ENCODE measurements at regions of chr1 and their contacts with region 1.

Region 1: GRCh38 chr1:183804881-183805841 is at the start of gene RGL1:
- DNase-seq: peak; percentile 81 to 85
- H3K4me3 ChIP-seq: peak within 1 kb of the TSS; percentile 74
- H3K4me3 Mint-ChIP-seq: peak within 1 kb of the TSS; percentile 99
- H3K27ac Mint-ChIP-seq: peak within 1 kb of the TSS; percentile 95
- H3K4me1 ChIP-seq: peaks cover 36% of the 10 kb centered on the region
- H3K4me1 Mint-ChIP-seq: peaks cover 28% of the 10 kb centered on the region
- H3K27me3 ChIP-seq: no peaks in the 10 kb centered on the region
- H3K27me3 Mint-ChIP-seq: no peaks in the 10 kb centered on the region
- CTCF ChIP-seq: no peak
- total RNA-seq, gene RGL1: 33.8 and 34.5 TPM in 2 replicates

Region 2: GRCh38 chr1:183792300-183792699 is 12.9 kb before region 1 on chr1:
- CTCF ChIA-PET with region 1: no interaction called
- POLR2A ChIA-PET with region 1: interaction called, 3 read pairs
- intact Hi-C with region 1: loop called (anchors 1 kb)
- DNase-seq: no peak
- H3K4me3 ChIP-seq: no peak overlapping the region
- H3K4me3 Mint-ChIP-seq: no peak overlapping the region
- H3K27ac Mint-ChIP-seq: no peak overlapping the region
- H3K4me1 ChIP-seq: peaks cover 15% of the 10 kb centered on the region
- H3K4me1 Mint-ChIP-seq: peaks cover 27% of the 10 kb centered on the region
- H3K27me3 ChIP-seq: no peaks in the 10 kb centered on the region
- H3K27me3 Mint-ChIP-seq: no peaks in the 10 kb centered on the region
- CTCF ChIP-seq: no peak

Region 3: GRCh38 chr1:183821889-183822611 is 16.9 kb after region 1 on chr1:
- CTCF ChIA-PET with region 1: no interaction called
- POLR2A ChIA-PET with region 1: no interaction called
- intact Hi-C with region 1: no loop called
- DNase-seq: no peak
- H3K4me3 ChIP-seq: no peak overlapping the region
- H3K4me3 Mint-ChIP-seq: no peak overlapping the region
- H3K27ac Mint-ChIP-seq: no peak overlapping the region
- H3K4me1 ChIP-seq: peaks cover 26% of the 10 kb centered on the region
- H3K4me1 Mint-ChIP-seq: peaks cover 22% of the 10 kb centered on the region
- H3K27me3 ChIP-seq: no peaks in the 10 kb centered on the region
- H3K27me3 Mint-ChIP-seq: no peaks in the 10 kb centered on the region
- CTCF ChIP-seq: no peak

Region 4: DNA sequence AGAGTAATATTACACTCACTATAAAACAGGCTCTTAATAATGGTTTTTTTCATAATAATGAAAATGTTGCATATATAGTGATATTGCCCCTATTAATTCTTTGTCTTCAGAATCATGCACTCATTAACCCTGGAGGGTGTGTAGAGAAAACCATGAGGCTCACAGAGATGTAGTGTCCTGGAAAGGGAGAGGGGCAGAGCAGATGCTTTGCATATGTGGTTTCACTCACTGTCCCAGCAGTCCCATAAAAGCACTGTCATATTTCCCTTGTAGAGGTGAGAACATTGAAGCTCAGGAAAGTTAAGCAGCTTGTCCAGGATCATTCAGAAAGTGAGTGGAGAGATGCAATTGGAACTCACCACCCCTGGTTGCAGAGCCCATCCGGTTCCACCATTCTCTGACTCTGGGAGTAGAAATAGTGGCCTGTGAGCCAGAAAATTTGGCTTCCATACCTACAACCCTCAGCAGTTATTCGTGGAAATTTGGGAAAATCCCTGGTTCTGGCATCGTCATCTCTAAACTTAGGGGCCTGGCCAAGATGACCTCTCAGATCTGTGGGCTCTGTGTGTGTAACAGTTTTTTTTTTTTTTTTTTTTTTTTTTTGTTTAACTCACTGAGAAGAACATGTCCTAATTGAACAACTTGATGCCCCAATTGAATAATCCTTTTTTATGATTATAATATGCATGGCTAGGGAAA is 86.1 kb after region 1 on chr1:
- CTCF ChIA-PET with region 1: no interaction called
- POLR2A ChIA-PET with region 1: no interaction called
- intact Hi-C with region 1: loop called (anchors 1 kb)
- DNase-seq: no peak
- H3K4me3 ChIP-seq: no peak overlapping the region
- H3K4me3 Mint-ChIP-seq: no peak overlapping the region
- H3K27ac Mint-ChIP-seq: no peak overlapping the region
- H3K4me1 ChIP-seq: peaks cover 13% of the 10 kb centered on the region; the same call in 1 of the 2 replicates
- H3K4me1 Mint-ChIP-seq: no peaks in the 10 kb centered on the region
- H3K27me3 ChIP-seq: no peaks in the 10 kb centered on the region
- H3K27me3 Mint-ChIP-seq: no peaks in the 10 kb centered on the region
- CTCF ChIP-seq: no peak

Measured in Caco-2 (cell line).